Prostate gland (tissue), 2 donors: ENCODE measurements at regions of chr4 and their contacts with region 1.

Region 1: GRCh38 chr4:106809076-106809475 is 227.0 kb downstream of the DKK2 start:
- DNase-seq: no peak
- H3K4me3 ChIP-seq: no peak overlapping the region
- H3K27ac ChIP-seq: no peak overlapping the region
- H3K4me1 ChIP-seq: no peaks in the 10 kb centered on the region
- H3K27me3 ChIP-seq: no peaks in the 10 kb centered on the region
- CTCF ChIP-seq: peak in 2 of 4 experiments; percentile 3 to 21
- POLR2A ChIP-seq: no peak

Region 2: GRCh38 chr4:106369456-106370060 is 439.5 kb before region 1 on chr4:
- intact Hi-C with region 1: loop called (anchors 5 kb)
- DNase-seq: no peak
- H3K4me3 ChIP-seq: no peak overlapping the region
- H3K27ac ChIP-seq: no peak overlapping the region
- H3K4me1 ChIP-seq: no peaks in the 10 kb centered on the region
- H3K27me3 ChIP-seq: no peaks in the 10 kb centered on the region
- CTCF ChIP-seq: peak in 3 of 4 experiments; percentile 20 to 46 (median 32)
- POLR2A ChIP-seq: no peak

Region 3: DNA sequence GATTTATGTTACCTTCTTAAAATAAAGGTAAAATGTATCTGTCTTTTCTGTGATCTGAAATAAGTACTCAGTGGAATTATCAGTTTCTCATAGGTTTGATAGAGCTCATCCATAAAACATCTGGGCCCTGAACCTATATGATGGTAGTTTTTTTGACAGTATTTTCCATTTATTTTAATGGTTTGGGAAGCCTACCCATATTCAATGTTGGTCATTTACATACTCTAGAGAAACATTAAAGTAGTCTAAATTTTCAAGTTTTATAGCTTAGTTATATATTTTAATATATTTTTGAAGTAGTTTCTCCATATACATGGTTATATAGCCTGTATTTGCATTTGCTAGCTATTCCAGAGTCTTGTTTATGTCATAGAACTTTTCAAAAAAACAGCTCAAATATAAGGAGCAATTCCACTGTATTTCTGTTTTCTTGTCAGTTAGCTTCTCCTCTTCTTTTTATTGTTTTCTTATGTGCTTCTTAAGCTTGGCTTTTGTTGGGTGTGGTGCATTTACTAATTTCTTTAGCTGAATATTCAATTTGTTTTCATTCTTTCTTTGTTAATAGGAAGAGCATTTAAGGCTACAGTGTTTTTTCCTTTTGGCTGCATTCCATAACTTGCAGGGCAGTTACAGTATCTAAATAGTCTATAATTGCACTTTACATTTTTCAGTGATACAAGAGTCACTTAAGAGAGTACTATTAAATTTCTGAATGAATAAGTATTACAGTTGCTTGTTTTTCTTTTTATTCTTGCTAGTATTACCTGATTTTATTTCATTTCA is 45.7 kb after region 1 on chr4:
- intact Hi-C with region 1: no loop called
- DNase-seq: no peak
- H3K4me3 ChIP-seq: no peak overlapping the region
- H3K27ac ChIP-seq: no peak overlapping the region
- H3K4me1 ChIP-seq: no peaks in the 10 kb centered on the region
- H3K27me3 ChIP-seq: no peaks in the 10 kb centered on the region
- CTCF ChIP-seq: no peak
- POLR2A ChIP-seq: no peak